ENCODE measurements at regions of chr9 and their contacts with region 1.

Region 1: DNA sequence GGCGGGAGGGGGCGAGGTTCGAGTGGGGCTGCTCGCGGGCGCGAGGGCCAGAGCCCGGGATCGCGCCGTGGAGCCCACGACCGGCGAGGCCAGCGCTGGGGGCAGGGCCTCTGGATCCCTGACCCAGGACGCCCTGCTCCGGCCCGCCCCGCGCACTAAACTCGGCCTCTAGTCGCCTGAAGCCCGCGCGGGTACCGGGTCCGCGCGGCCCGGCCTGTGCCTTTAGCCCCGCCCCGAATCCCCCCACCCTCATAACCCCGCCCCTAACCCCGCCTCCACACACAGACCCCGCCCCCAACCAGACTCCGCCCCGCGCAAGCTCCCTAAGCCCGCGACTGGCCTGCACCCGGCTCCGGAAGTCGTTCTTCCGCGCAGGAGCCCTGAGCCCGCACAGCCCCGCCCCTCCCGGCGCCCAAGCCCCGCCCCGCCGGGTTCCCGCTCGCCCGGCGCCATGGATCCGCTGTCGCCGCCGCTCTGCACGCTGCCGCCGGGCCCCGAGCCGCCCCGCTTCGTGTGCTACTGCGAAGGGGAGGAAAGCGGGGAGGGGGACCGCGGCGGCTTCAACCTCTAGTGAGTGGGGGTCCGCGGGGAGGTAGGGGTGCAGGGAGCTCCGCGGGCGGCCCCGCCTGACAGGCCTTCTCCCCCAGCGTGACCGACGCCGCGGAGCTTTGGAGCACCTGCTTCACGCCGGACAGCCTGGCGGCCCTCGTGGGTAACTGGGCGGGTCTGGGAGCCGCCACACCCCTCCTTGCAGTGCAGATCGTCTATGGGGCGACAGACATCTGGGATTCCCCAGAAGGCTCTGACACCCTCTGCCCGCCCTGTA is at the start of gene PAXX:
- DNase-seq: peak; percentile 99
- ATAC-seq: peak; percentile 81
- H3K4me3 Mint-ChIP-seq: peak within 1 kb of the TSS; percentile 85
- H3K27ac Mint-ChIP-seq: peak within 1 kb of the TSS; percentile 82
- H3K4me1 Mint-ChIP-seq: peaks cover 17% of the 10 kb centered on the region
- H3K27me3 Mint-ChIP-seq: peaks cover 22% of the 10 kb centered on the region
- total RNA-seq, gene PAXX: 93.4 to 97.2 TPM

Region 2: GRCh38 chr9:136949817-136950655 is 42.2 kb before region 1 on chr9:
- POLR2A ChIA-PET with region 1: interaction called, 10 read pairs
- DNase-seq: peak; percentile 96
- ATAC-seq: peak; percentile 96
- H3K4me3 Mint-ChIP-seq: peak overlapping the region; percentile 89
- H3K27ac Mint-ChIP-seq: peak overlapping the region; percentile 90
- H3K4me1 Mint-ChIP-seq: peaks cover 1% of the 10 kb centered on the region
- H3K27me3 Mint-ChIP-seq: no peaks in the 10 kb centered on the region

Region 3: DNA sequence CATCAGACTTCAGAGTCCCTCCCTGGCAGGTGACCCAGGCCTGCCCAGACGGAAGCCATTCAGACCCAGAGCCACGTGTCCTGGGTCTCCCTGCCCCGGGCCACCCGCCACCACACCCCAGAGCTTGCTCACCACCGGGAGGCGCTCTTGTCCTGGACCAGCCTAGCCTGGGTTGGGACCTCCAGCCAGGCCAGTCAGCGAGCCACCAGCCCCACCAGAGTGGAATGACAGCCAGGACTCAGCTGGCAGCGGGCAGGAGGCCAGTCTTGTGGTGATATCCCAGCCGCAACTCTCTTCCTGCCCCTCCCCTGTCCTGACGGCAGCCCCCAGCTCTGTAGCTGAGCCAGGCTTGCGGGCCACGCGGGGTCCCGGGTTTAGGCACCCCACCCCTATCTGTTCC is 16.6 kb before region 1 on chr9:
- POLR2A ChIA-PET with region 1: interaction called, 19 read pairs
- DNase-seq: peak; percentile 58
- ATAC-seq: no peak
- H3K4me3 Mint-ChIP-seq: no peak overlapping the region
- H3K27ac Mint-ChIP-seq: no peak overlapping the region
- H3K4me1 Mint-ChIP-seq: peaks cover 6% of the 10 kb centered on the region
- H3K27me3 Mint-ChIP-seq: no peaks in the 10 kb centered on the region

Region 4: GRCh38 chr9:137017791-137018497 is 25.7 kb after region 1 on chr9:
- POLR2A ChIA-PET with region 1: no interaction called
- DNase-seq: no peak
- ATAC-seq: no peak
- H3K4me3 Mint-ChIP-seq: no peak overlapping the region
- H3K27ac Mint-ChIP-seq: no peak overlapping the region
- H3K4me1 Mint-ChIP-seq: no peaks in the 10 kb centered on the region
- H3K27me3 Mint-ChIP-seq: no peaks in the 10 kb centered on the region